ENCODE measurements at regions of chr2 and their contacts with region 1.

Region 1: DNA sequence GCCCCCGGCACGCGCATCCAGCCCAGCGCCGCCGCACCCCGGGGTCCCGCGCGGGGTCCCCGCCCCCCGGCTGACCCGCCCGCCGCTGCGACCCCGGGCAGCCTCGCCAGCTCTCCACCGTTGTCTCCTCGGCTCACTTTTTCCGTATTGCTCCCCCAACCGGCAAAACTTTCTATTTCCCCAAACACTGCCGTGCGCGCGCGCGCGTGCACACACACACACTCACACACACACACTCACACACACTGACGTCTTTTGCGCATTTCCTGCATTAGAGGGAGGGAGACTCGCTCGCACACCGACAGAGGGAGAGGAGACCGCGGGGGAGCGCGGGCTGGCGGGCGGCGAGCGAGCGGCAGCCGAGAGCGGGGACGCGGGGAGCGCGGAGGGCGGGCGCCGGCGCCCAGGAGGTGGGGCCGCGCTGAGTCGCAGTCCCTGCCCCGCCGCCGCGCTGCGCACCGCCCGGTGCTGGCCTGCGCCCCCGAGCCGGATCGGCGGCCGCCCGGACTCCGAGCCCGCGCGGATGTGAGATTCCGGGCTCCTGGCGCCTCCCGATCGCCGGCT is 542 bp upstream of the PRKCE start:
- DNase-seq: peak; percentile 90
- ATAC-seq: peak; percentile 85
- H3K4me3 ChIP-seq: peak overlapping the region; percentile 74 to 84
- H3K27ac ChIP-seq: peak overlapping the region; percentile 81
- H3K4me1 ChIP-seq: peaks cover 9 to 16% of the 10 kb centered on the region in 2 experiments
- H3K27me3 ChIP-seq: no peaks in the 10 kb centered on the region
- CTCF ChIP-seq: peak in 2 of 3 experiments; percentile 26 to 38; a peak in 4 of 6 replicates
- POLR2A ChIP-seq: peak; percentile 86
- RAD21 ChIP-seq: peak; percentile 47

Region 2: GRCh38 chr2:45675263-45675812 is 24.4 kb after region 1 on chr2:
- CTCF ChIA-PET with region 1: interaction called, 3 read pairs
- POLR2A ChIA-PET with region 1: no interaction called
- RAD21 ChIA-PET with region 1: no interaction called
- intact Hi-C with region 1: loop called (anchors 1 kb)
- DNase-seq: peak; percentile 57
- ATAC-seq: peak; percentile 74
- H3K4me3 ChIP-seq: peak overlapping the region in 1 of 2 experiments; percentile 30; a peak in 2 of 4 replicates
- H3K27ac ChIP-seq: peak overlapping the region; percentile 75
- H3K4me1 ChIP-seq: peaks cover 28 to 50% of the 10 kb centered on the region in 2 experiments
- H3K27me3 ChIP-seq: no peaks in the 10 kb centered on the region
- CTCF ChIP-seq: no peak
- POLR2A ChIP-seq: no peak
- RAD21 ChIP-seq: peak; percentile 30

Region 3: GRCh38 chr2:45680351-45680967 is 29.5 kb after region 1 on chr2:
- CTCF ChIA-PET with region 1: interaction called, 3 read pairs
- POLR2A ChIA-PET with region 1: no interaction called
- RAD21 ChIA-PET with region 1: no interaction called
- intact Hi-C with region 1: loop called (anchors 1 kb)
- DNase-seq: no peak
- ATAC-seq: no peak
- H3K4me3 ChIP-seq: no peak overlapping the region
- H3K27ac ChIP-seq: no peak overlapping the region
- H3K4me1 ChIP-seq: peaks cover 42 to 80% of the 10 kb centered on the region in 2 experiments
- H3K27me3 ChIP-seq: no peaks in the 10 kb centered on the region
- CTCF ChIP-seq: no peak
- POLR2A ChIP-seq: no peak
- RAD21 ChIP-seq: no peak